Activated CD4-positive, alpha-beta T cell treated with anti-CD3 and anti-CD28 coated beads for 36 hours (primary cell): ENCODE measurements at regions of chr1 and their contacts with region 1.

Region 1: DNA sequence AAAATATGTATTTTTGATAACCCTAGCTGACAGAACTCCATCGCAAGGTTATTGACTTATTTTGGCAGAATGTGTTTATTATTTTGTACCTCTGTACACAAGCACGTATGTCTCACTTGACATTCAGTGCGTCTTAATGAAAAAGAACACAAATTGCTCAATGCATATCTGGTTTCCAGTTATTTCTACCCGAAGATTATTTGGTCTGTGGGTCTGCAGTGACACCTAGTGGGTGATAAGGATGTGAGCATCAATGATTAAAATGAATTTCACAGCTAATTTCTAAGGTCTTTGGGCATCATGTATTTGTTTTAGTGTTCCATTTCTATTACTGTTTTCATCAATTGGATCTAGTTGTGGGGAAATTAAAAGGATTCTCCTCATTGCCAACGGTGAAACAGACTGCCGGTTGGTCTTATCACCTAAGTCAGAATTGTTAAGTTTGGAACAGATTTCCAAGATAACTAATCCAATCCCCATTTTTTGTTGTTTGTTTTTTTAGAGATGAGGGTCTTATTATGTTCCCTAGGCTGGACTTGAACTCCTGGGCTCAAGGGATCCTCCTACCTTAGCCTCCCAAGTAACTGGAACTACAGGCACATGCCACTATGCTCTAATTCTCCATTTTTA is 13.9 kb downstream of the DDX20 start:
- DNase-seq: peak; percentile 66
- ATAC-seq: no peak
- H3K4me3 Mint-ChIP-seq: no peak overlapping the region
- H3K27ac Mint-ChIP-seq: no peak overlapping the region
- H3K4me1 Mint-ChIP-seq: peaks cover 12% of the 10 kb centered on the region
- H3K27me3 Mint-ChIP-seq: no peaks in the 10 kb centered on the region

Region 2: DNA sequence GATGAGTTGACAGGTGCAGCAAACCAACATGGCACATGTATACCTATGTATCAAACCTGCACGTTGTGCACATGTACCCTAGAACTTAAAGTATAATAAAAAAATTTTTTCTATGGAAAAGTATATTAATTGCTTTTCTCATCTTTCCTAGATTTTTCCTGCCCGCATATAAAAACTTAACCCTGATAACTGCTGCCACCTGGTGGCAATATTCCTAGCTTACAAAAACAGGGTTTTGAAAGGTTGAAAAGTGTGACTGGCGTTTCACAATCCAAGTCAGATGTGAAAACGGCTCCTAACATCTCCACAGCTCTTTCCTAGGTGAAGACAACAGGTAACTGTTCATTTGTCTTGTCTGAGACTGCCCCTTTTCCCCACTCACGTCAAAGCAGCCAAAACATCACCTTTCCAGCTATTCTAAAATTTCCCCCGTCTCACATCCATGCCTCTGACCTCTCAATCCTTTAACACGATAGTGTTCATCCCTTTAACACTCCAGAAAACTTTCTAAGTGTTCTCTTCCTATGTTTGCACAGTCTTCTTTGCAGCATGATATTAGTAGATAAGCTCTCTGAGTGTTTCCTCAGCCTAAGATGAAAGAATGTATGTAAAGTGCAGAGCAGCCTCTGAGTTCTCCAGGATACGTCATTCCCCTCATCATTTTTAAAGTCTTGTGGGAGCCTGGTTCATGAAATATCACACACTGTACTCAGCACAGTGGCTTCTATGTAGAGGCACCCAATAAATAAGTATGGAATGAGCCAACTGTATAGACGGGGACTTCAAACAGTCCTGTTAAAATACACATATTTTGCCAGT is 369.6 kb before region 1 on chr1:
- CTCF ChIA-PET with region 1: interaction called, 29 read pairs
- POLR2A ChIA-PET with region 1: no interaction called
- intact Hi-C with region 1: no loop called
- DNase-seq: peak; percentile 65
- ATAC-seq: no peak
- H3K4me3 Mint-ChIP-seq: no peak overlapping the region
- H3K27ac Mint-ChIP-seq: no peak overlapping the region
- H3K4me1 Mint-ChIP-seq: peaks cover 34% of the 10 kb centered on the region
- H3K27me3 Mint-ChIP-seq: no peaks in the 10 kb centered on the region

Region 3: GRCh38 chr1:111448918-111449702 is 320.5 kb before region 1 on chr1 and contains the starts of genes ATP5PB and WDR77:
- CTCF ChIA-PET with region 1: interaction called, 13 read pairs
- POLR2A ChIA-PET with region 1: no interaction called
- intact Hi-C with region 1: no loop called
- DNase-seq: peak; percentile 94
- ATAC-seq: peak; percentile 98
- H3K4me3 Mint-ChIP-seq: peak within 1 kb of the TSS; percentile 99
- H3K27ac Mint-ChIP-seq: peak within 1 kb of the TSS; percentile 98
- H3K4me1 Mint-ChIP-seq: peaks cover 79% of the 10 kb centered on the region
- H3K27me3 Mint-ChIP-seq: no peaks in the 10 kb centered on the region
- total RNA-seq, gene ATP5PB: 292 to 301 TPM
- total RNA-seq, gene WDR77: 42.5 to 53.6 TPM

Region 4: GRCh38 chr1:111666841-111667270 is 102.8 kb before region 1 on chr1:
- CTCF ChIA-PET with region 1: no interaction called
- POLR2A ChIA-PET with region 1: no interaction called
- intact Hi-C with region 1: no loop called
- DNase-seq: no peak
- ATAC-seq: no peak
- H3K4me3 Mint-ChIP-seq: no peak overlapping the region
- H3K27ac Mint-ChIP-seq: no peak overlapping the region
- H3K4me1 Mint-ChIP-seq: peaks cover 81% of the 10 kb centered on the region
- H3K27me3 Mint-ChIP-seq: no peaks in the 10 kb centered on the region

Region 5: GRCh38 chr1:111720274-111720976 is 49.2 kb before region 1 on chr1:
- CTCF ChIA-PET with region 1: interaction called, 40 read pairs
- POLR2A ChIA-PET with region 1: no interaction called
- intact Hi-C with region 1: loop called (anchors 1 kb)
- DNase-seq: no peak
- ATAC-seq: no peak
- H3K4me3 Mint-ChIP-seq: no peak overlapping the region
- H3K27ac Mint-ChIP-seq: no peak overlapping the region
- H3K4me1 Mint-ChIP-seq: peaks cover 16% of the 10 kb centered on the region
- H3K27me3 Mint-ChIP-seq: no peaks in the 10 kb centered on the region

Region 6: DNA sequence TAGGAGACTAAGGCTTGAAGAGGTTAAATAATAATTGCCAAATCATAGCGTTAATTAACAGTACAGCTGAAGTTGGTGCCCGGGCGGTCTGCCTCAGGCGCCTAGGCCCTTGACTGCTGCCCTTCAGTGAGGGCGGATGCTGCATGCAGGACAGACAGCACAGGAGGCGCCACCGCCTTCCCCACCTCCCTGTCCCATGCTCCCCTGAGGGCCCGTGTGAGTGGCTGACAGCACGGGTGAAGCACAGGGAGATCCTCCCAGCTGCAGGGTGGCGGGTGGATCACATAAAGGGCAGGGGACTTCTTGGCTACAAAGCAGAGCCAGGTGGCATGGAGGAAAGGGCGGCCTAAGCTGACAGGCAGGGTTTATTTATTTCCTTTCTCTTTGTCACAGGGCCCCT is 35.1 kb after region 1 on chr1:
- CTCF ChIA-PET with region 1: no interaction called
- POLR2A ChIA-PET with region 1: no interaction called
- intact Hi-C with region 1: no loop called
- DNase-seq: no peak
- ATAC-seq: no peak
- H3K4me3 Mint-ChIP-seq: no peak overlapping the region
- H3K27ac Mint-ChIP-seq: no peak overlapping the region
- H3K4me1 Mint-ChIP-seq: no peaks in the 10 kb centered on the region
- H3K27me3 Mint-ChIP-seq: no peaks in the 10 kb centered on the region

Region 7: DNA sequence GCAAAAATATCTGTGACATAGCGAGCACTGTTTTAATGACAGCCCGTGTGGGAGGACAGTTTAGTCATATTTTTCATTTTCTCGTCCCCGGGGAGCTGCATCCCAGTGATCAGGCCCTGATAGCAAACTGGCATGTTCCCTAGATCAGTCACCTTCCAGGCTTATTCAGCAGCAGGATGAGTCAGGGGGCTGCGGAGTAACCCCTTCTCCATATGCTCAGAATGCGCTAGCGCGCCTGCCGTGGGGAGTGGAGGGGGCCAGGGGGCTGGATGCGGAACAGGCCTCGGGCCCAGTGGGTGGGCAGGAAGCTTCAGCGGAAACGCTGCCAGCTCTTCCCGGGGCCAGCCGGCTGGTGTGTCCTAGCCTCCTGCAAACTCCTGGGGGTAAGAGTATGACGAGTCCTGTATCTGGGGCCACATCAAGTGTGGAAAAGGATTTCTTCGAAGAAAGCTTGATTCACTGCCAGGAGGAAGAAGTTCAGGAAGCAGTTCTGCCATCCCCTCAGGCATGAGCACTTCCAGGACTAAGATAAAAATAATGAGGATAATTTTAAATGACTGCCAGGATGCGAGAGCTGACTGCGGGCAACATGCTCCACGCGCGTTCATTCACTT is 125.9 kb after region 1 on chr1:
- CTCF ChIA-PET with region 1: no interaction called
- POLR2A ChIA-PET with region 1: no interaction called
- intact Hi-C with region 1: no loop called
- DNase-seq: no peak
- ATAC-seq: no peak
- H3K4me3 Mint-ChIP-seq: no peak overlapping the region
- H3K27ac Mint-ChIP-seq: no peak overlapping the region
- H3K4me1 Mint-ChIP-seq: no peaks in the 10 kb centered on the region
- H3K27me3 Mint-ChIP-seq: peaks cover 4% of the 10 kb centered on the region